ENCODE measurements at regions of chr2 and their contacts with region 1.

Region 1: GRCh38 chr2:176140513-176141317 is 10.6 kb upstream of the HOXD4 start:
- DNase-seq: peak in 1 of 2 donors; percentile 39
- ATAC-seq: peak; percentile 53 to 69
- H3K4me3 ChIP-seq: peak overlapping the region; percentile 61 to 80 (median 74)
- H3K27ac ChIP-seq: peak overlapping the region; percentile 81 to 89 (median 86)
- H3K4me1 ChIP-seq: peaks cover 11 to 12% of the 10 kb centered on the region in 2 donors
- H3K27me3 ChIP-seq: peaks cover 0 to 23% (median 20%) of the 10 kb centered on the region in 3 donors
- CTCF ChIP-seq: peak; percentile 86 to 95 (median 90)
- POLR2A ChIP-seq: no peak

Region 2: GRCh38 chr2:176187899-176188773 is 47.4 kb after region 1 on chr2 and contains the start of gene HOXD1:
- in situ Hi-C with region 1: no loop called
- intact Hi-C with region 1: loop called (anchors 5 kb)
- DNase-seq: no peak
- ATAC-seq: peak; percentile 73 to 77
- H3K4me3 ChIP-seq: peak within 1 kb of the TSS; percentile 65 to 77 (median 70)
- H3K27ac ChIP-seq: peak within 1 kb of the TSS in 1 of 4 donors; percentile 26
- H3K4me1 ChIP-seq: peaks cover 3 to 10% of the 10 kb centered on the region in 2 donors
- H3K27me3 ChIP-seq: peaks cover 38 to 53% (median 47%) of the 10 kb centered on the region in 3 donors
- CTCF ChIP-seq: no peak
- POLR2A ChIP-seq: no peak
- total RNA-seq, gene HOXD1: 0.20 TPM in 1 of 4 donors, not detected in the others

Region 3: DNA sequence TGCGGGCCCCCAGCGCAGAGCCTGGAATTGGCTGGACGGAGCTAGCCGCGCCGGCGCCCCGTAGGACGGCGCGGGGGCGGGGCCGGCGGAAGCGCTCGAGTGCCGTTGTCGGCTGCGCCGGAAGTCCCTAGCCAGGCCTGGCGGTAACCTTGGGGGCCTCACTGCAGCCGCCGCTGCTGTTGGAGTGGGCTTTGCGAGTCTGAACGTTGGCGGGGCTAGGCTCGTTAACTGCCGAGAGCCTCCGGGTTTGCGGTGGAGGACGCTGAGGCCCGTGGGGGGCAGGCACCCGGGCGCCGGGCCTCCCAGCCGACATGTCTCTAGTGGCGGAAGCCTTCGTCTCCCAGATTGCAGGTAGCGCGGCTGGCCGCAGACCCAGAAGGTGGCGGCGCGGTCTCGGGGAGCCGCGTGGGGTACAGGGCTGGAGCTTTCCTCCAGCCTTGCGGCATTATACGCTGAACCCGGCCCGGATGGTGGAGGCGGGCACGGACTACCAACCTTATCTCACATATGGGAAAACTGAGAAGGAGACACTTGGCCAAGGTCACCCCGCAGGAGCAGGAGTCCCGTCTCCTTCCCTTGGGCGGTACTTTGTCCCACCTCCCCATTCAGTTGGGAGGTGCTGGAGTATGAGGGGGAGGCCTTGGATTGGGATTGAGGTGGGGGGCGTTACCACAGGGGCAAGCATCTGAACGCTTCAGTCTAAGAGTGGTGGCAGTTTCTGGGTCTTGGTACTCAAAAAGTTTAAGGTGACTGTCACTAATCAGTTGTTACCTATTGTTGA is 128.8 kb after region 1 on chr2 and contains the start of gene MTX2:
- in situ Hi-C with region 1: no loop called
- intact Hi-C with region 1: loop called (anchors 2 kb)
- DNase-seq: peak; percentile 48 to 61
- ATAC-seq: peak; percentile 93 to 95
- H3K4me3 ChIP-seq: peak within 1 kb of the TSS; percentile 84 to 94 (median 89)
- H3K27ac ChIP-seq: peak within 1 kb of the TSS; percentile 85 to 92 (median 89)
- H3K4me1 ChIP-seq: peaks cover 13 to 29% of the 10 kb centered on the region in 2 donors
- H3K27me3 ChIP-seq: no peaks in the 10 kb centered on the region
- CTCF ChIP-seq: peak in 3 of 5 experiments; percentile 19 to 46 (median 29)
- POLR2A ChIP-seq: peak; percentile 59 to 61
- total RNA-seq, gene MTX2: 35.8 to 43.3 (median 39.1) TPM

Region 4: DNA sequence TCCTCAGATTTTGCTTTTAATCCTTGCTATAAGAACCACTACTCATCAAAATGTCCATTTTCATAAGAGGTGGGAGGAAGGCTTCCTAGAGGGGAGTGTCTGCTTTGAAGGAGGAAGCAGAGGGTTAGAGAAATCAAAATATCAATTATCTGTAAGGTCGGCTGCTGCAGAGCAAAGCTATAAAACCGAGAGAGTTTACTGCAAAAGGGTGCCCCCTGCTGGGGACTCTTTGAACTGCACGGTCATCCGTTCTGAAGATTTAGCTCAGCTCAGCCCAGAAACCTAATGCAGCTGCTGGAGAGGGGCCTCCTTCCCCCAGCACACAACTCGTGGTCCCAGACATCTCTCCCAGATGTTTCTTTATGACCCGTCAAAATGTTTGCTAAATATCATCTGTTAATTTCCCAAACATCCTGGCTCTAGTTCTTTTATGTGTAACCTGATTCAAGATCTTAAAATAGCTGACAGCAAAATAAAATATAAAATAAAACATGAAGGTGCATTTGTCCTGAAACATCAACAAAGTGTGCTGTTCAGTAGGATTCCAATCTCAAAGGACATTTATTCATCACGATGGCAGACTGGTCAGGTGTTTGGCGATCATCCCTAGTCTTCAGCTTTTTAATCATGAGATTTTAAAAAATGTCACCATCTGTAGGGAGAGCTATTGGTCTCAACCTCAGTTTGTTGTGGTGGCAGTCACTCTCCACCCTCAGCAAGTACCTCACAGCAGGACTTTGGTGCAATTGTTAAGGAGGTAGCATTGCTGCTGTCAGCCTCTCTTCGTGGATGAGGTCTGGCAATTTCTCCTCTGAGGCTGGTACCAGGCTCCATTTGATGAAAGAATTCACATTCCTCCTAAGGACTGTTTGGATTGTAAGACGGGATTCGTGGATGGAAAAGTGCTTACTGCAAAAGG is 314.4 kb after region 1 on chr2:
- in situ Hi-C with region 1: loop called in 1 of 4 experiments (anchors 5 kb)
- intact Hi-C with region 1: loop called (anchors 1 kb)
- DNase-seq: peak; percentile 42 to 59
- ATAC-seq: peak; percentile 10 to 72
- H3K4me3 ChIP-seq: no peak overlapping the region
- H3K27ac ChIP-seq: peak overlapping the region; percentile 24 to 59 (median 45)
- H3K4me1 ChIP-seq: peaks cover 0 to 5% of the 10 kb centered on the region in 2 donors
- H3K27me3 ChIP-seq: no peaks in the 10 kb centered on the region
- CTCF ChIP-seq: peak; percentile 66 to 95 (median 82)
- POLR2A ChIP-seq: no peak

Region 5: DNA sequence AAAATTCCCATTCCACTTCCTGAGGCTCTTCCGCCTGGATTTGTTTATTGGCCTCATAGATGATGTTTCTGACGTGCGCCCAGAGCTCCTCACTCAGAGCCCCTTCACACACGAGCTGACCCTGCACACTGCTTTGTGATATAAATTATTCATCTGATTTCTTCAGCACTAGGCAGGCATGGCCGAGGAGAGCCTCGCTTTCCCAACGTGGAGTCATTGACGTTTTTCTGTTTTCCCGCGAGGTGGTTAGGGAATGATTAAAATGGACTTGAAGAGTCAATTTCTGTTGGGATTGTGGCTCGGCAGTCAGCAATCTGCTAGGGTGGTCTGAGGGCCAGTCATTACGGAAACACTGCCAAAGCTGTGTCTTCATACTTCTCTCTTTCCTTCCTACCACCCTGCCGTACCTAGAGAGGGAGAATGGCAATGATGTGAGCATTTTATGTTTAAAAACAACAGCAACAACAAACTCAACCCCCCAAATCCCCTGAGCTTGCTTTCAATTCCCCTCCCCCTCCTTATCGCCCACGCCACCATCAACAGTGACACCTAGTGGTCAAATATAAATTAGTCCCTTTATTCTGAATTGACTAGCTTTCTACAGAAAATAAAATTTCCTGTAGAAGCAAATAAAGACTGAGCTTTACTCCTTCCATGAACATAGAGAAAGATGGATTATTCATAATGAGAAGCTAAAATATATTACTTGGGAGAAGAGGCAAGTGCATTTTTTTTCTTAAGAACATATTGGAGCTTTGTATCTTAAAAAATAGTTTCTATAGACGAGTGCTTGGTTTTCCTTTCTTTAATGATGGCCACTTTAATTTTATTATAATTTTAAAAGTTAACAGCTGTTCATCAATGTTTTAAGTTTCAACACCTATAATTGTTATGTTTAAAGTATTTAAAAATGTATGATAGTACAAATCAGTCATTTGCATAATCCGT is 413.7 kb after region 1 on chr2:
- in situ Hi-C with region 1: loop called in 2 of 4 experiments (anchors 5 to 10 kb)
- intact Hi-C with region 1: loop called (anchors 1 kb)
- DNase-seq: no peak
- ATAC-seq: peak; percentile 64 to 76
- H3K4me3 ChIP-seq: peak overlapping the region; percentile 57 to 65 (median 62)
- H3K27ac ChIP-seq: peak overlapping the region; percentile 55 to 69 (median 61)
- H3K4me1 ChIP-seq: peaks cover 6 to 11% of the 10 kb centered on the region in 2 donors
- H3K27me3 ChIP-seq: no peaks in the 10 kb centered on the region
- CTCF ChIP-seq: peak; percentile 61 to 84 (median 70)
- POLR2A ChIP-seq: no peak

Region 6: GRCh38 chr2:176638167-176639015 is 497.7 kb after region 1 on chr2:
- in situ Hi-C with region 1: no loop called
- intact Hi-C with region 1: loop called (anchors 1 kb)
- DNase-seq: peak; percentile 26 to 37
- ATAC-seq: peak; percentile 81 to 88
- H3K4me3 ChIP-seq: peak overlapping the region; percentile 63 to 84 (median 68)
- H3K27ac ChIP-seq: peak overlapping the region in 3 of 4 donors; percentile 50 to 70 (median 56)
- H3K4me1 ChIP-seq: peaks cover 0 to 5% of the 10 kb centered on the region in 2 donors
- H3K27me3 ChIP-seq: peaks cover 9 to 31% (median 23%) of the 10 kb centered on the region in 3 donors
- CTCF ChIP-seq: peak; percentile 59 to 81 (median 74)
- POLR2A ChIP-seq: no peak

Region 7: GRCh38 chr2:176814306-176815052 is 673.8 kb after region 1 on chr2:
- in situ Hi-C with region 1: loop called in 1 of 4 experiments (anchors 25 kb)
- intact Hi-C with region 1: no loop called
- DNase-seq: no peak
- ATAC-seq: no peak
- H3K4me3 ChIP-seq: no peak overlapping the region
- H3K27ac ChIP-seq: no peak overlapping the region
- H3K4me1 ChIP-seq: peaks cover 0 to 3% of the 10 kb centered on the region in 2 donors
- H3K27me3 ChIP-seq: no peaks in the 10 kb centered on the region
- CTCF ChIP-seq: peak in 3 of 5 experiments; percentile 32 to 73 (median 60)
- POLR2A ChIP-seq: no peak

Measured in gastrocnemius medialis (tissue), 4 donors.